A673 (cell line): ENCODE measurements at regions of chr5 and their contacts with region 1.

Region 1: GRCh38 chr5:127875235-127876021 is 172.2 kb downstream of the CCDC192 start:
- DNase-seq: peak; percentile 62
- H3K4me3 ChIP-seq: no peak overlapping the region
- H3K27ac ChIP-seq: no peak overlapping the region
- H3K4me1 ChIP-seq: no peaks in the 10 kb centered on the region
- H3K27me3 ChIP-seq: peaks cover 14% of the 10 kb centered on the region
- CTCF ChIP-seq: peak; percentile 47

Region 2: DNA sequence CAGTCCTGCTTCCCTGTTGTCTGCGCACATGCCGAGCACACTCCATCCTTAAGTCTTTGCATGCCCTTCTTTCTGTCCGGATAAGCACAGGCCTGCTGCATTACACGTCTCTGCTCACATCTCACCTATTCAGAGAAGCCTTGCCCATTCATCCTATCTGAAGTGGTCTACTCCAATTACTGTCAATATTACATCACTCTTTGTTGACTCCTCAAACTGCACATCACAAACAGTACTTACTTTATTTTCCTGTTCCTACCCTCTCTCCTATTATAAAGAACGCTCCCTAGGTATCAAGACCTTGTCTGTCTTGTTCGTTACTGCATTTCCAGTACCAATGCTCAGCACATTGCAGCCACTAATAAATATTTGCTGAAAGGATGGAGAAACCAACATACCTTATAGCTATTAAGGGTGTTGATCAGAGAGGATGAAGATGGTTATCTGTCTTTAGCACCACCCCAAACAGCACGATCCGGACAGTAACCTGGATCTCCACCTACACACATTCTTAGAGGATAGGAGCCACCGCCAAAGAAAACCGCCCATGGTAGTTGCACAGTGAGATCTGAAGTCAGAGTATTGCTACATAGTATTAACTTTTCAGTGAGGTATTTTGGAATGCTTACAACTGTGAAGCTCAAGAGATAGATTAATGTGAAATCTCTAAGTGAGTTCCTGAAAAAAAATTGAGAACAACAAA is 359.6 kb before region 1 on chr5:
- CTCF ChIA-PET with region 1: no interaction called
- POLR2A ChIA-PET with region 1: no interaction called
- intact Hi-C with region 1: no loop called
- DNase-seq: no peak
- H3K4me3 ChIP-seq: no peak overlapping the region
- H3K27ac ChIP-seq: no peak overlapping the region
- H3K4me1 ChIP-seq: peaks cover 3% of the 10 kb centered on the region
- H3K27me3 ChIP-seq: no peaks in the 10 kb centered on the region
- CTCF ChIP-seq: no peak

Region 3: DNA sequence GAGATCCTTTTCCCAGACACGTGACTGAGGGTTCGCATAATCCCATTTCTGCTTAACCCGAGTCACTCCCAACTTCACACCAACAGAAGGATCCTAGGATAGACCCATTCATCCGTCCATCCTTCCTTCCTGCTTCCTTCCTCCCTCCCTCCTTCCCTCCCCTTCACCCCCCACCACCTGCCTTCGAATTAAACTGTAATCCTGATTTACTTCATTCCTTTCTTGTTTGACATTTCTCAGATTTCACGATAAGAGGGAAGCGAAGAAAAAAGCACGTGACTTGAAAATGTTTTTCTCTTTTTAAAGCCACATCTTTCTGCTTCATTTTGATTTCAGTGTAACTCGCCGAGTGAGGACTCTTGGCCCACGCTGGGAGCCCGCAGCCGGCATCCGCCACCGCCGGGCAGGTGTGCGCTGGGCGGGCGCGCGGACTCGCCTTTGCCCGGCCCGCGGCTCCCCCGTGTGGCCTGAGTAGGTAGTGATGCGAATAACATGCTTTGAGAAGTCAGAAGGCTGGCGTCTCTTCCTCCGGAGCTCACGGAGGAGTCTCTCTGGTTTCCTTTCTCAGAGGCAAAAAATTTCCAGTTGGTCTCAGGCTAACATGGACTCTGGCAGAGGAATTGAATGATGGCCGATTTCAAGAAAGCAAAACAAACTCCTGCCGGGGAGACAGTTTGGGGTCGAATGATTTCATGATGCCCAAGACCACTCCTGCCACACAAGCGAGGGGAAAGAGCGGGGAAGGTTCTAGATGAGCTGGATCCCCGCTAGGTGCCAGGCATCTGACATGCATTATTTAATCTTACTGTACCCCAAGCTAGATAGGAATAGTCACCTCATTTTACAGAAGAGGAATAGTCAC is 325.9 kb after region 1 on chr5:
- CTCF ChIA-PET with region 1: interaction called, 6 read pairs
- POLR2A ChIA-PET with region 1: no interaction called
- intact Hi-C with region 1: loop called (anchors 1 kb)
- DNase-seq: peak; percentile 69
- H3K4me3 ChIP-seq: peak overlapping the region; percentile 28
- H3K27ac ChIP-seq: no peak overlapping the region
- H3K4me1 ChIP-seq: peaks cover 4% of the 10 kb centered on the region
- H3K27me3 ChIP-seq: no peaks in the 10 kb centered on the region
- CTCF ChIP-seq: peak; percentile 75

Region 4: GRCh38 chr5:128498844-128499455 is 623.5 kb after region 1 on chr5:
- CTCF ChIA-PET with region 1: no interaction called
- POLR2A ChIA-PET with region 1: no interaction called
- intact Hi-C with region 1: loop called (anchors 10 kb)
- DNase-seq: peak; percentile 55
- H3K4me3 ChIP-seq: no peak overlapping the region
- H3K27ac ChIP-seq: no peak overlapping the region
- H3K4me1 ChIP-seq: no peaks in the 10 kb centered on the region
- H3K27me3 ChIP-seq: no peaks in the 10 kb centered on the region
- CTCF ChIP-seq: peak; percentile 47

Region 5: GRCh38 chr5:128844354-128844923 is 969.0 kb after region 1 on chr5:
- CTCF ChIA-PET with region 1: no interaction called
- POLR2A ChIA-PET with region 1: no interaction called
- intact Hi-C with region 1: loop called (anchors 10 kb)
- DNase-seq: peak; percentile 42
- H3K4me3 ChIP-seq: no peak overlapping the region
- H3K27ac ChIP-seq: no peak overlapping the region
- H3K4me1 ChIP-seq: no peaks in the 10 kb centered on the region
- H3K27me3 ChIP-seq: no peaks in the 10 kb centered on the region
- CTCF ChIP-seq: peak; percentile 45